ENCODE measurements at regions of chrX and their contacts with region 1.

Region 1: DNA sequence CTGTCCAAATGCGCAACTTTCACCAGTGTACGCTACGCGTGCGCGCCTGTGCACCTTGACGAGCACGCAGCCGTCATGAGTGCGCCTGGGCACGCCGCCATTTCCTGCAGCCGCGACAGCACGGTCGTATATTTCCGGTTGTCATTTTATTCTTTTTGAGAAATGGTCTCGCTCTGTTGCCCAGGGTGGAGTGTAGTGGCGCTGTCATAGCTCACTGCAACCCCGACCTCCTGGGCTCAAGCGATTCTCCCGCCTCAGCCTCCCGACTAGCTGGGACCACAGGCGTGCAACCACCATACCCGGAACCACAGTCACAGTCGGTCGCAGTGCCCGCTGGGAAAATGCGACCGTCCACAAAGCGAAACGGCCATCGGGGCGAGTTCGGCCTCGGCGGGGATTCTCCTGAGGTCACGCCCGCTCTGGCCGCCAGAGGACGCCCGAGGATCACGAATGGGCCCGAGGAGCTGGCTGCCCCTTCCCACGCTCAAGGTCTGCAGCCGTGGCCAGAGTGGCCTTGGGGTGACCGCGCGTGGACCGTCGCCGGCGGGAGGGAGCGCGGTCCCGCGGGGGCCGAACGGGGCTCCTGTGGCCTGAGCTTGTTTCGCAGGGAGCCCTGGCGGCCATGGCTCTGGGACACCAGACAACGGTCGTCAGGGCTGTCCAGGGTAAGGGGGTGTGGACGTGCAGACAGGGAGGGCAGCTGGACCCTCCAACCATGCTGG is 23.7 kb upstream of the PNMA3 start:
- DNase-seq: peak; percentile 18
- H3K4me3 ChIP-seq: peak overlapping the region in 1 of 3 experiments; percentile 22
- H3K27ac ChIP-seq: no peak overlapping the region
- H3K4me1 ChIP-seq: peaks cover 11% of the 10 kb centered on the region
- H3K27me3 ChIP-seq: no peaks in the 10 kb centered on the region
- CTCF ChIP-seq: peak; percentile 48 to 77

Region 2: GRCh38 chrX:152958524-152959465 is 73.8 kb before region 1 on chrX:
- CTCF ChIA-PET with region 1: no interaction called
- dilution Hi-C with region 1: no loop called
- in situ Hi-C with region 1: no loop called
- intact Hi-C with region 1: loop called (anchors 1 kb)
- DNase-seq: peak; percentile 73
- H3K4me3 ChIP-seq: no peak overlapping the region
- H3K27ac ChIP-seq: peak overlapping the region; percentile 36
- H3K4me1 ChIP-seq: no peaks in the 10 kb centered on the region
- H3K27me3 ChIP-seq: no peaks in the 10 kb centered on the region
- CTCF ChIP-seq: peak; percentile 52 to 75

Region 3: GRCh38 chrX:153413211-153413610 is 380.7 kb after region 1 on chrX:
- CTCF ChIA-PET with region 1: no interaction called
- dilution Hi-C with region 1: no loop called
- in situ Hi-C with region 1: no loop called
- intact Hi-C with region 1: loop called (anchors 2 kb)
- DNase-seq: no peak
- H3K4me3 ChIP-seq: no peak overlapping the region
- H3K27ac ChIP-seq: no peak overlapping the region
- H3K4me1 ChIP-seq: no peaks in the 10 kb centered on the region
- H3K27me3 ChIP-seq: peaks cover 4% of the 10 kb centered on the region
- CTCF ChIP-seq: no peak

Region 4: GRCh38 chrX:153494541-153495361 is 462.2 kb after region 1 on chrX and contains the start of gene BGN:
- CTCF ChIA-PET with region 1: no interaction called
- dilution Hi-C with region 1: no loop called
- in situ Hi-C with region 1: loop called in 1 of 2 experiments (anchors 25 kb)
- intact Hi-C with region 1: no loop called
- DNase-seq: no peak
- H3K4me3 ChIP-seq: peak within 1 kb of the TSS in 2 of 3 experiments; percentile 27 to 33
- H3K27ac ChIP-seq: no peak within 1 kb of the TSS
- H3K4me1 ChIP-seq: peaks cover 6% of the 10 kb centered on the region
- H3K27me3 ChIP-seq: no peaks in the 10 kb centered on the region
- CTCF ChIP-seq: no peak
- total RNA-seq, gene BGN: 2.6 to 13.5 TPM

Region 5: DNA sequence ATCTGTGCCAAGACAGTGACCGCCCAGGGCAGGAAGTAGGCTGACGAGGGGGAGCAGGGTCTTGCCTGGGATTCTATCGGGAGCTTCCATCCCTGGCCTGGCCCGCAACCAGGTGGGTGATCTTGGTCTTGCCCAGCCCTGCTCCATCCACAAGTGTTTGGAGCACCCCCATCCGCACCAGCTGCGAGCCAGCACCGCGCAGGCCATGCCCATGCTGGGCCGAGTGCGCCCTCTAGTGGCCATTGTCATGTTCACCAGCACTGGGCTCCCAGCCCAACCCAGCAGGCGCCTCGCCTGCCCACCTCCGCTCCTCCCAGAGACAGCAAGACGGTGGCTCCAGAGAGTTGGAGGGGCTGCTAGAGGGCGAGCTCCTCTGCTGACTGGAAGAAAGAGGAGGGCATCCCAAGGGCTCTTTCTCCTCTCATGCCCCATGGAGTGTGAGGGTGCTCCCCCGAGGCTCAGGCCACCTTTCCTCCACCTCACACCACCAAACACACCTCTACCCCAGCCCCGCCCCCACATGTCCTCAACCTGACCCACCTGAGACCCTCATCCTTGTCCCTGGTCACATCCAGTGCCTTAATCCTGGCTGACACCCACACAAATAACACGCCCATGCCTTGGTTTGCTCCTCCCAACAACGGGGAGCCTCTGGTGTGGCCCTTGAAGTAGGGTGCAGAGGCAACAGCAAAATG is 475.1 kb after region 1 on chrX:
- CTCF ChIA-PET with region 1: interaction called, 4 read pairs
- dilution Hi-C with region 1: no loop called
- in situ Hi-C with region 1: no loop called
- intact Hi-C with region 1: loop called (anchors 1 kb)
- DNase-seq: peak; percentile 47
- H3K4me3 ChIP-seq: no peak overlapping the region
- H3K27ac ChIP-seq: no peak overlapping the region
- H3K4me1 ChIP-seq: no peaks in the 10 kb centered on the region
- H3K27me3 ChIP-seq: no peaks in the 10 kb centered on the region
- CTCF ChIP-seq: peak; percentile 51 to 78

Region 6: DNA sequence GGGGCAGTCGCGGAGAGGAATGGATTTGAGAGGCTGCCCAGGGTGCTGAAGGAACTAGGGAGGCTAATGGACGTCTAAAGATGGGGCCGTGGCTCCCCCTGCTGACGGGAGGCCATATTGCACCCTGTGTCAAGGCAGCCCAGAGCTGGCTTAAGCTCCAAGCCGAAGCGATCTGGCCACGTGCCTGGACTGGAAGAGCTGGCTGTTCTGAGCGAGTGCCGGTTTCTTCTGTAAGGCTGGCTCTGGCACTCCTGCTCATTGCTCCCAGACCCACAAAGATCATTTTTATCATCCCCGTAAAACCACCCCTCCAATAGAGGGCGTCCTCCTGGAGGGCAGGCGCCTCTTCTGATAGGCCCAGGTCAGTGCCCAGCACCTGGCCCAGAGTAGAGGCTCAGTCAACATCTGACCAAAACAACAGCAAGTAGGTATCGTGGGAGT is 635.4 kb after region 1 on chrX:
- CTCF ChIA-PET with region 1: no interaction called
- dilution Hi-C with region 1: no loop called
- in situ Hi-C with region 1: no loop called
- intact Hi-C with region 1: loop called (anchors 5 kb)
- DNase-seq: peak; percentile 60
- H3K4me3 ChIP-seq: peak overlapping the region in 2 of 3 experiments; percentile 7 to 38
- H3K27ac ChIP-seq: no peak overlapping the region
- H3K4me1 ChIP-seq: no peaks in the 10 kb centered on the region
- H3K27me3 ChIP-seq: no peaks in the 10 kb centered on the region
- CTCF ChIP-seq: peak; percentile 56 to 76